ENCODE measurements at regions of chr17 and their contacts with region 1.

Region 1: DNA sequence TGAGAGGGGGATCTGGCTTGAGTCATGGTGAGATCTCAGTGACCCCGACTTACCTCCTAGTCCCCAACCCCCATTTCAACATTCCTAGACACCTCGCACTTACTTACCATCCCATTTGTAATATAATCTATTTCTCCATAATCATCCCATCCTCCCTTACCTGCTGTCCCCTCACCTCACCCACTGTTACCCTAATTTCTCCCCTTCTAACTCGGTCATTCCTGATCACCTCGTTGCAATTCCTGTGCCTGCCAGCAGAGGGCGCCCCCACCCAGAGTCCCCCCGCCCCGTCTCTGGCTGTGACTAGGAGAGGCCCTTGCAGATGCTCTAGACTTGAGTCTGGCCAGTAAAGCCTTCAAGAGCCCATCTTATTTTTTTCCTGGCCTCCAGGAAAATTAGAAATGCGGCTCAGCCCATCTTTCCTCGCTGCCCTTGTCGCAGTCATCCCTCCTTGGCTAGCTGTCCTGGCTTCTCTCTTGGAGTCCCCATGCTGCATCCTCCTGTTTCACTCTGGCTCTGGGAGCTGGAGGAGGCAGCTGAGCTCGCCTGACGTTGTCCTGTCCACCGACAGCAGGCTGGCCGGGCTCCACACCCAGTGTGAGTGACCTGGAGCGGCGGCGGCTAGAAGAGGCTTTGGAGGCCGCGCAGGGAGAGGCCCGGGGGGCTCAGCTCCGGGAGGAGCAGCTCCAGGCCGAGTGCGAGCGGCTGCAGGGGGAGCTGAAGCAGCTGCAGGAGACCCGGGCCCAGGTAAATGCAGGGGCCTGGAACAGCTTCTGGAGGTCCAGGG is 5.0 kb downstream of the TBKBP1 start:
- DNase-seq: peak; percentile 88
- ATAC-seq: peak; percentile 21
- H3K4me3 Mint-ChIP-seq: peak overlapping the region; percentile 15
- H3K27ac Mint-ChIP-seq: peak overlapping the region; percentile 14
- H3K4me1 Mint-ChIP-seq: peaks cover 73% of the 10 kb centered on the region
- H3K27me3 Mint-ChIP-seq: no peaks in the 10 kb centered on the region
- CTCF ChIP-seq: peak; percentile 99

Region 2: GRCh38 chr17:47663912-47664625 is 34.9 kb before region 1 on chr17:
- CTCF ChIA-PET with region 1: interaction called, 13 read pairs
- POLR2A ChIA-PET with region 1: interaction called, 4 read pairs
- intact Hi-C with region 1: no loop called
- DNase-seq: peak; percentile 76
- ATAC-seq: peak; percentile 77
- H3K4me3 Mint-ChIP-seq: no peak overlapping the region
- H3K27ac Mint-ChIP-seq: peak overlapping the region; percentile 83
- H3K4me1 Mint-ChIP-seq: peaks cover 23% of the 10 kb centered on the region
- H3K27me3 Mint-ChIP-seq: no peaks in the 10 kb centered on the region
- CTCF ChIP-seq: peak; percentile 89

Region 3: GRCh38 chr17:47733047-47733673 is 34.2 kb after region 1 on chr17 and contains the start of gene TBX21:
- CTCF ChIA-PET with region 1: interaction called, 424 read pairs
- POLR2A ChIA-PET with region 1: interaction called, 493 read pairs
- intact Hi-C with region 1: loop called (anchors 5 kb)
- DNase-seq: peak; percentile 97
- ATAC-seq: peak; percentile 88
- H3K4me3 Mint-ChIP-seq: peak within 1 kb of the TSS; percentile 91
- H3K27ac Mint-ChIP-seq: peak within 1 kb of the TSS; percentile 97
- H3K4me1 Mint-ChIP-seq: peaks cover 57% of the 10 kb centered on the region
- H3K27me3 Mint-ChIP-seq: no peaks in the 10 kb centered on the region
- CTCF ChIP-seq: peak; percentile 32
- total RNA-seq, gene TBX21: 53.0 to 56.9 TPM

Region 4: GRCh38 chr17:47789611-47790561 is 90.9 kb after region 1 on chr17:
- CTCF ChIA-PET with region 1: interaction called, 22 read pairs
- POLR2A ChIA-PET with region 1: no interaction called
- intact Hi-C with region 1: no loop called
- DNase-seq: peak; percentile 70
- ATAC-seq: peak; percentile 97
- H3K4me3 Mint-ChIP-seq: peak overlapping the region; percentile 66
- H3K27ac Mint-ChIP-seq: no peak overlapping the region
- H3K4me1 Mint-ChIP-seq: peaks cover 9% of the 10 kb centered on the region
- H3K27me3 Mint-ChIP-seq: peaks cover 58% of the 10 kb centered on the region
- CTCF ChIP-seq: peak; percentile 78

Measured in activated CD8-positive, alpha-beta T cell treated with anti-CD3 and anti-CD28 coated beads for 36 hours (primary cell).